ENCODE measurements at regions of chr4 and their contacts with region 1.

Region 1: DNA sequence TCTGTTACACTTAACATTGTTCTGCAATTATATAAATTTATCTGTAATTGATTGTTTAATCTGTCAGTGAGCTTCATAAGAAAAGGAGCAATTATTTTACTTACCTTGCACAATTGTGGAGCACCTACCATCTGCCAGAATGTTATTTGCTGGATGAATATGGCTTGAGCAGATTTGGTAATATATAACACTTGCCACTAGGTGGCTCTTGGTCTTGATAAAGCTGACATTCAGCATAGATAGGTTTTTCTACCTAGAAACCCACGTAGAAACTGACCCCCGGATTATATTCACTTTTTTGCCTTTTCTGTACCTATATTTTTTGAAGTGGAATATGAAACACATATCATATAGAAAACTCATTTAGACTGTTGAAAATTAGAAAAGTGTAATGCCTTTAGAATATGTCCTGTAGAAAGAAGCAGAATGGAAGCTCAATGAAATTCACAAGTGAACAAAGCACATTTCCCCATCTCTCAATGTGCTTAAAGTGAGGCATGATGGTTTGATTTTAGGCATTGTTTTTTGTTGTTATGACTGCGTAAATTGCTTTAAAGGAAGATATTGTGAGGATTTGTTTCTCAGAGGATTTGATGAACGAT is 9.5 kb downstream of the RBPJ start:
- H3K4me3 Mint-ChIP-seq: peak overlapping the region; percentile 23
- H3K27ac Mint-ChIP-seq: peak overlapping the region; percentile 55
- H3K4me1 Mint-ChIP-seq: peaks cover 76% of the 10 kb centered on the region
- H3K27me3 Mint-ChIP-seq: no peaks in the 10 kb centered on the region

Region 2: DNA sequence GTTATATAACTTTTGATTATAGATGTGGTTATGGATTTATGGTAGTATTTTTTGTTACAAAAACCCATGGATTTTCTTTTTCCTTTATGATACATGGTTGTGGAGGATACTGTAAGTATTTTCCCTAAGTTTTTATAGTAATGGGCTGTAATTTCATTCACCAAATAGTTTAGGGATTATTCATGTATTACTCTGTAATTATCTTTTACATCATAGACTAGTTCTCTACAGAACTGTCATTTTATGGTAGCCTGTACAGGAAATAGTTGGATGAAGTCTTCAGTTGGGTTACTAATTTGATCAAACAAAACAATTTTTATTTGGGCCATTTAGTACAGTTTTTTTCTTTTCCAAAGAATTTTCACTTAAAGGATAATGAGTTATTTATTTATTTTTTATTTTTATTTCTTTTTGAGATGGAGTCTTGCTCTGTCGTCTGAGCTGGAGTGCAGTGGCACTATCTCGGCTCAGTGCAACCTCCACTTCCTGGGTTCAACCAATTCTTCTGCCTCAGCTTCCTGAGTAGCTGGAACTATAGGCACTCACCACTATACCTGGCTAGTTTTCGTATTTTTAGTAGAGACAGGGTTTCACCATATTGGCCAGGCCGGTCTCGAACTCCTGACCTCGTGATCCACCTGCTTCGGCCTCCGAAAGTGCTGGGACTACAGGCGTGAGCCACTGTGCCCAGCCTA is 32.6 kb after region 1 on chr4:
- intact Hi-C with region 1: loop called (anchors 5 kb)
- H3K4me3 Mint-ChIP-seq: no peak overlapping the region
- H3K27ac Mint-ChIP-seq: no peak overlapping the region
- H3K4me1 Mint-ChIP-seq: peaks cover 13% of the 10 kb centered on the region
- H3K27me3 Mint-ChIP-seq: no peaks in the 10 kb centered on the region

Region 3: DNA sequence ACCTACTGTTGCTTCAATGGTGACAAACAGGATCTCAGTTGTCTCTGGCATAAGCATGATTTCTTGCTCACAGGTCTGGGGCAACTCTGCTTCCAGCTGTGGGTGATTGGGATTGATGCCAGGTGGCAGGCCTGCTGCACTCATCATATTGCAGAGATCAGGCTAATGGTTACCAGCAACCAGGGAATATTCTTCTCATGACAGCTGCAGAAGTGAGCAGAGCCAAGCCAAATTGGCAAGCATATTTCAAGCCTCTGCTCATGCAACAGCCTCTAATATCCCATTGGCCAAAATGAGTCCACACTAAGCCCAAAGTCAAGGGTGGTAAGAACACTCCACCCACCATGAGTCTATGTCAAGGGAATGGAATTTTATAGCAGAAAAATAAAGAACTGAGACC is 226.9 kb after region 1 on chr4:
- intact Hi-C with region 1: no loop called
- H3K4me3 Mint-ChIP-seq: no peak overlapping the region
- H3K27ac Mint-ChIP-seq: no peak overlapping the region
- H3K4me1 Mint-ChIP-seq: peaks cover 3% of the 10 kb centered on the region
- H3K27me3 Mint-ChIP-seq: peaks cover 5% of the 10 kb centered on the region

Measured in dendritic cell treated with granulocyte-macrophage colony-stimulating factor and Interleukin-4, amounts not matched to agents 40 ng/mL and 50 ng/mL, for 4 days (primary cell).